T-cell (primary cell): ENCODE measurements at regions of chr2 and their contacts with region 1.

Region 1: GRCh38 chr2:201451292-201452057 is at the starts of genes STRADB and TRAK2:
- DNase-seq: peak; percentile 84 to 97 (median 93)
- ATAC-seq: peak; percentile 88 to 94 (median 90)
- H3K4me3 ChIP-seq: peak within 1 kb of the TSS; percentile 86 to 95
- H3K4me3 Mint-ChIP-seq: peak within 1 kb of the TSS; percentile 96 to 99 (median 96)
- H3K27ac ChIP-seq: peak within 1 kb of the TSS; percentile 79
- H3K27ac Mint-ChIP-seq: peak within 1 kb of the TSS; percentile 92 to 95
- H3K4me1 ChIP-seq: peaks cover 32 to 33% of the 10 kb centered on the region in 2 experiments
- H3K4me1 Mint-ChIP-seq: peaks cover 32 to 57% (median 52%) of the 10 kb centered on the region in 3 donors
- H3K27me3 ChIP-seq: no peaks in the 10 kb centered on the region
- H3K27me3 Mint-ChIP-seq: no peaks in the 10 kb centered on the region
- total RNA-seq, gene STRADB: 10.2 to 24.2 (median 18.0) TPM
- total RNA-seq, gene TRAK2: 39.5 to 47.9 (median 43.4) TPM

Region 2: GRCh38 chr2:202203348-202203747 is 751.9 kb after region 1 on chr2:
- CTCF ChIA-PET with region 1: no interaction called
- POLR2A ChIA-PET with region 1: interaction called in 1 of 2 experiments, 12 read pairs
- DNase-seq: no peak
- ATAC-seq: no peak
- H3K4me3 ChIP-seq: no peak overlapping the region
- H3K4me3 Mint-ChIP-seq: no peak overlapping the region
- H3K27ac ChIP-seq: no peak overlapping the region
- H3K27ac Mint-ChIP-seq: no peak overlapping the region
- H3K4me1 ChIP-seq: no peaks in the 10 kb centered on the region
- H3K4me1 Mint-ChIP-seq: no peaks in the 10 kb centered on the region
- H3K27me3 ChIP-seq: no peaks in the 10 kb centered on the region
- H3K27me3 Mint-ChIP-seq: no peaks in the 10 kb centered on the region